ENCODE measurements at regions of chr2 and their contacts with region 1.

Region 1: GRCh38 chr2:198774576-198774975 is 683.2 kb downstream of the SATB2 start:
- DNase-seq: no peak
- H3K4me3 ChIP-seq: no peak overlapping the region
- H3K27ac ChIP-seq: no peak overlapping the region
- H3K4me1 ChIP-seq: no peaks in the 10 kb centered on the region
- H3K27me3 ChIP-seq: no peaks in the 10 kb centered on the region
- CTCF ChIP-seq: no peak

Region 2: GRCh38 chr2:198706476-198707082 is 68.0 kb before region 1 on chr2:
- CTCF ChIA-PET with region 1: no interaction called
- dilution Hi-C with region 1: loop called (anchors 5 kb)
- in situ Hi-C with region 1: no loop called
- intact Hi-C with region 1: no loop called
- DNase-seq: no peak
- H3K4me3 ChIP-seq: no peak overlapping the region
- H3K27ac ChIP-seq: no peak overlapping the region
- H3K4me1 ChIP-seq: no peaks in the 10 kb centered on the region
- H3K27me3 ChIP-seq: no peaks in the 10 kb centered on the region
- CTCF ChIP-seq: no peak

Region 3: GRCh38 chr2:198731842-198732399 is 42.7 kb before region 1 on chr2:
- CTCF ChIA-PET with region 1: no interaction called
- dilution Hi-C with region 1: no loop called
- in situ Hi-C with region 1: no loop called
- intact Hi-C with region 1: no loop called
- DNase-seq: no peak
- H3K4me3 ChIP-seq: no peak overlapping the region
- H3K27ac ChIP-seq: no peak overlapping the region
- H3K4me1 ChIP-seq: no peaks in the 10 kb centered on the region
- H3K27me3 ChIP-seq: no peaks in the 10 kb centered on the region
- CTCF ChIP-seq: no peak

Region 4: GRCh38 chr2:198863655-198864054 is 89.1 kb after region 1 on chr2:
- CTCF ChIA-PET with region 1: no interaction called
- dilution Hi-C with region 1: loop called (anchors 5 kb)
- in situ Hi-C with region 1: no loop called
- intact Hi-C with region 1: no loop called
- DNase-seq: no peak
- H3K4me3 ChIP-seq: no peak overlapping the region
- H3K27ac ChIP-seq: no peak overlapping the region
- H3K4me1 ChIP-seq: no peaks in the 10 kb centered on the region
- H3K27me3 ChIP-seq: no peaks in the 10 kb centered on the region
- CTCF ChIP-seq: no peak

Measured in mammary epithelial cell (primary cell).